ENCODE measurements at regions of chr18 and their contacts with region 1.

Region 1: GRCh38 chr18:21853016-21853415 is 112.4 kb downstream of the MIB1 start:
- DNase-seq: no peak
- ATAC-seq: no peak
- H3K4me3 ChIP-seq: no peak overlapping the region
- H3K27ac ChIP-seq: no peak overlapping the region
- H3K4me1 ChIP-seq: no peaks in the 10 kb centered on the region
- H3K27me3 ChIP-seq: no peaks in the 10 kb centered on the region
- CTCF ChIP-seq: no peak

Region 2: GRCh38 chr18:21820035-21820810 is 32.8 kb before region 1 on chr18:
- CTCF ChIA-PET with region 1: no interaction called
- POLR2A ChIA-PET with region 1: interaction called, 10 read pairs
- in situ Hi-C with region 1: no loop called
- intact Hi-C with region 1: no loop called
- DNase-seq: no peak
- ATAC-seq: no peak
- H3K4me3 ChIP-seq: no peak overlapping the region
- H3K27ac ChIP-seq: no peak overlapping the region
- H3K4me1 ChIP-seq: no peaks in the 10 kb centered on the region
- H3K27me3 ChIP-seq: no peaks in the 10 kb centered on the region
- CTCF ChIP-seq: peak; percentile 62; the same call in 1 of the 2 replicates

Region 3: DNA sequence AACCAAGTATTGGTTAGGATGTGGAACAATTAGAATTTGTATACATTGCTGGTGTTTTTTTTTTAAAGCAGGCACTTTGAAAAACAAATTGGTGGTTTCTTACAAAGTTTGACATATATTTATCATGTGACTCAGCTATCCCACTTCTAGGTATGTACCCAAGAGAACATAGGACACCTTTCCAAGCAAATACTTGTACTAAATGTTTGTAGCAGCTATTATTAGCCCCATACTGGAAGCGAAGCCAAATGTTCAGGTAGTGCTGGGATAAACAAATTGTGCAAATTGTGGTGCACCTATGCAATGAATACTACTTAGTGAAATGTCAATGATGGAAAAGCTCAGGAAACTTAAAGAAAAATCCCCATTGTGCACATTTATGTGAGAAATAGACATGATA is 11.4 kb before region 1 on chr18:
- CTCF ChIA-PET with region 1: no interaction called
- POLR2A ChIA-PET with region 1: interaction called, 13 read pairs
- in situ Hi-C with region 1: no loop called
- intact Hi-C with region 1: no loop called
- DNase-seq: no peak
- ATAC-seq: no peak
- H3K4me3 ChIP-seq: no peak overlapping the region
- H3K27ac ChIP-seq: no peak overlapping the region
- H3K4me1 ChIP-seq: no peaks in the 10 kb centered on the region
- H3K27me3 ChIP-seq: no peaks in the 10 kb centered on the region
- CTCF ChIP-seq: no peak

Measured in Panc1 (cell line).